ENCODE measurements at regions of chr6 and their contacts with region 1.

Region 1: DNA sequence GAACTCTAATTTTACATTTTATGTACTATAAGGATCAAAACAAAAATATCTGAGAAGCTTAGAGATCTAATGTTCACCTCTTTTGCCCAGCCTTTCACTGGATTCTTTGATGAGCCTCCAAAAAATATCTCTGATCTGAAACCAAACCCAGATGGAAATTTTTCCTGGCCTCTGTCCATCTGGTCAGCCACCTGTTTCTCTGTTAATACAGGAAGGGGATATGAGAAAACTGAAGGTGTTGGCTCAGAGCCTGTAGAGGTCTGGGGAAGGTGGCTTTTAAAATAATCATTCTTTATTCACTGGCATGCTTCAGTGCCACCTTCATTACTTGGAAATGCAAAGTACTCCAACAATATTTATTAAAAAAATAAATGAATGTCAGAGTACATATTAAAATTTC is 8.5 kb upstream of the MCM3 start:
- DNase-seq: peak; percentile 74
- H3K4me3 ChIP-seq: no peak overlapping the region
- H3K27ac ChIP-seq: no peak overlapping the region
- H3K4me1 ChIP-seq: peaks cover 6% of the 10 kb centered on the region
- H3K27me3 ChIP-seq: peaks cover 0 to 2% of the 10 kb centered on the region in 2 experiments
- CTCF ChIP-seq: no peak
- POLR2A ChIP-seq: no peak

Region 2: GRCh38 chr6:52125139-52125538 is 167.9 kb before region 1 on chr6:
- CTCF ChIA-PET with region 1: no interaction called
- POLR2A ChIA-PET with region 1: no interaction called
- dilution Hi-C with region 1: no loop called
- intact Hi-C with region 1: no loop called
- DNase-seq: no peak
- H3K4me3 ChIP-seq: no peak overlapping the region
- H3K27ac ChIP-seq: no peak overlapping the region
- H3K4me1 ChIP-seq: no peaks in the 10 kb centered on the region
- H3K27me3 ChIP-seq: peaks cover 0 to 3% of the 10 kb centered on the region in 2 experiments
- CTCF ChIP-seq: no peak
- POLR2A ChIP-seq: no peak

Region 3: DNA sequence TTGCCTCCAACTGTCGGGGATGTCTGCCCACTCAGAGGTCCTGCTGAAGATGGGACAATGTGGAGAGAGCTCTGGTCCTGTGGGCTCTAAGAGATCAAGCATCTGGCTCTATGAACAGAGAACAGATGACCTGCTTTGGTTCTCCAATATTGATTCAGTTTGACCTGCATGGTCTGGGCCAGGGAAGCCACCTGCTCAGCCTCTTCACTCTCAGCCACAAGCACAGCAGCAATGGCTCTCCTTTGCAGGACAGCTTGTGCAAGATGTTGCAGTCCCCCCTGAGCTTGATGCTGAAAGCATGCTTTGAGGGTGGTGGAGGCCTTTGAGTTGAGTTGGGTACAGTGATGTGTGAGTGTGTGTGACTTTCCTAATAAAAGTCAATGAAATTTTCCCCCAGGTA is 10.1 kb after region 1 on chr6:
- CTCF ChIA-PET with region 1: interaction called, 3 read pairs
- POLR2A ChIA-PET with region 1: no interaction called
- dilution Hi-C with region 1: no loop called
- intact Hi-C with region 1: loop called (anchors 1 kb)
- DNase-seq: no peak
- H3K4me3 ChIP-seq: no peak overlapping the region
- H3K27ac ChIP-seq: no peak overlapping the region
- H3K4me1 ChIP-seq: peaks cover 4% of the 10 kb centered on the region
- H3K27me3 ChIP-seq: no peaks in the 10 kb centered on the region
- CTCF ChIP-seq: no peak
- POLR2A ChIP-seq: no peak